IMR-90 (cell line): ENCODE measurements at regions of chr9 and their contacts with region 1.

Region 1: GRCh38 chr9:118223111-118223510 is 518.9 kb downstream of the TLR4 start:
- DNase-seq: no peak
- ATAC-seq: no peak
- H3K4me3 ChIP-seq: no peak overlapping the region
- H3K27ac ChIP-seq: no peak overlapping the region
- H3K4me1 ChIP-seq: no peaks in the 10 kb centered on the region
- H3K27me3 ChIP-seq: no peaks in the 10 kb centered on the region
- CTCF ChIP-seq: no peak
- POLR2A ChIP-seq: no peak
- RAD21 ChIP-seq: no peak

Region 2: GRCh38 chr9:117293206-117294114 is 929.7 kb before region 1 on chr9:
- CTCF ChIA-PET with region 1: no interaction called
- POLR2A ChIA-PET with region 1: no interaction called
- dilution Hi-C with region 1: no loop called
- in situ Hi-C with region 1: no loop called
- intact Hi-C with region 1: no loop called
- DNase-seq: no peak
- ATAC-seq: no peak
- H3K4me3 ChIP-seq: no peak overlapping the region
- H3K27ac ChIP-seq: no peak overlapping the region
- H3K4me1 ChIP-seq: no peaks in the 10 kb centered on the region
- H3K27me3 ChIP-seq: no peaks in the 10 kb centered on the region
- CTCF ChIP-seq: no peak
- POLR2A ChIP-seq: no peak
- RAD21 ChIP-seq: no peak

Region 3: GRCh38 chr9:118271936-118272335 is 48.8 kb after region 1 on chr9:
- CTCF ChIA-PET with region 1: no interaction called
- POLR2A ChIA-PET with region 1: no interaction called
- dilution Hi-C with region 1: no loop called
- in situ Hi-C with region 1: no loop called
- intact Hi-C with region 1: no loop called
- DNase-seq: no peak
- ATAC-seq: no peak
- H3K4me3 ChIP-seq: no peak overlapping the region
- H3K27ac ChIP-seq: no peak overlapping the region
- H3K4me1 ChIP-seq: no peaks in the 10 kb centered on the region
- H3K27me3 ChIP-seq: no peaks in the 10 kb centered on the region
- CTCF ChIP-seq: no peak
- POLR2A ChIP-seq: no peak
- RAD21 ChIP-seq: no peak

Region 4: GRCh38 chr9:119009249-119009648 is 786.1 kb after region 1 on chr9:
- CTCF ChIA-PET with region 1: interaction called, 10 read pairs
- POLR2A ChIA-PET with region 1: no interaction called
- dilution Hi-C with region 1: no loop called
- in situ Hi-C with region 1: no loop called
- intact Hi-C with region 1: no loop called
- DNase-seq: no peak
- ATAC-seq: no peak
- H3K4me3 ChIP-seq: no peak overlapping the region
- H3K27ac ChIP-seq: no peak overlapping the region
- H3K4me1 ChIP-seq: no peaks in the 10 kb centered on the region
- H3K27me3 ChIP-seq: no peaks in the 10 kb centered on the region
- CTCF ChIP-seq: no peak
- POLR2A ChIP-seq: no peak
- RAD21 ChIP-seq: no peak